ENCODE measurements at regions of chr14 and their contacts with region 1.

Region 1: GRCh38 chr14:21367582-21368144 is 16.2 kb downstream of the SUPT16H start:
- DNase-seq: no peak
- H3K4me3 ChIP-seq: no peak overlapping the region
- H3K27ac ChIP-seq: no peak overlapping the region
- H3K4me1 ChIP-seq: no peaks in the 10 kb centered on the region
- H3K27me3 ChIP-seq: no peaks in the 10 kb centered on the region
- CTCF ChIP-seq: no peak

Region 2: GRCh38 chr14:21233457-21234076 is 134.1 kb before region 1 on chr14:
- CTCF ChIA-PET with region 1: interaction called, 5 read pairs
- dilution Hi-C with region 1: no loop called
- in situ Hi-C with region 1: no loop called
- intact Hi-C with region 1: loop called (anchors 10 kb)
- DNase-seq: no peak
- H3K4me3 ChIP-seq: no peak overlapping the region
- H3K27ac ChIP-seq: no peak overlapping the region
- H3K4me1 ChIP-seq: no peaks in the 10 kb centered on the region
- H3K27me3 ChIP-seq: no peaks in the 10 kb centered on the region
- CTCF ChIP-seq: peak; percentile 19 to 49